ENCODE measurements at regions of chr5 and their contacts with region 1.

Region 1: GRCh38 chr5:42889311-42889933 is 77.7 kb upstream of the SELENOP start:
- DNase-seq: peak; percentile 69 to 85 (median 77)
- H3K4me3 ChIP-seq: no peak overlapping the region
- H3K27ac ChIP-seq: no peak overlapping the region
- H3K4me1 ChIP-seq: no peaks in the 10 kb centered on the region
- H3K27me3 ChIP-seq: no peaks in the 10 kb centered on the region
- CTCF ChIP-seq: peak; percentile 73 to 87 (median 74)
- EP300 ChIP-seq: no peak
- POLR2A ChIP-seq: no peak

Region 2: GRCh38 chr5:41856644-41857491 is 1032.6 kb before region 1 on chr5:
- intact Hi-C with region 1: loop called in 1 of 4 experiments (anchors 10 kb)
- DNase-seq: peak in 4 of 5 donors; percentile 29 to 59 (median 33)
- H3K4me3 ChIP-seq: no peak overlapping the region
- H3K27ac ChIP-seq: no peak overlapping the region
- H3K4me1 ChIP-seq: no peaks in the 10 kb centered on the region
- H3K27me3 ChIP-seq: no peaks in the 10 kb centered on the region
- CTCF ChIP-seq: peak; percentile 54 to 65 (median 64)
- EP300 ChIP-seq: no peak
- POLR2A ChIP-seq: no peak

Measured in ovary (tissue), 10 donors.